ENCODE measurements at regions of chr17 and their contacts with region 1.

Region 1: DNA sequence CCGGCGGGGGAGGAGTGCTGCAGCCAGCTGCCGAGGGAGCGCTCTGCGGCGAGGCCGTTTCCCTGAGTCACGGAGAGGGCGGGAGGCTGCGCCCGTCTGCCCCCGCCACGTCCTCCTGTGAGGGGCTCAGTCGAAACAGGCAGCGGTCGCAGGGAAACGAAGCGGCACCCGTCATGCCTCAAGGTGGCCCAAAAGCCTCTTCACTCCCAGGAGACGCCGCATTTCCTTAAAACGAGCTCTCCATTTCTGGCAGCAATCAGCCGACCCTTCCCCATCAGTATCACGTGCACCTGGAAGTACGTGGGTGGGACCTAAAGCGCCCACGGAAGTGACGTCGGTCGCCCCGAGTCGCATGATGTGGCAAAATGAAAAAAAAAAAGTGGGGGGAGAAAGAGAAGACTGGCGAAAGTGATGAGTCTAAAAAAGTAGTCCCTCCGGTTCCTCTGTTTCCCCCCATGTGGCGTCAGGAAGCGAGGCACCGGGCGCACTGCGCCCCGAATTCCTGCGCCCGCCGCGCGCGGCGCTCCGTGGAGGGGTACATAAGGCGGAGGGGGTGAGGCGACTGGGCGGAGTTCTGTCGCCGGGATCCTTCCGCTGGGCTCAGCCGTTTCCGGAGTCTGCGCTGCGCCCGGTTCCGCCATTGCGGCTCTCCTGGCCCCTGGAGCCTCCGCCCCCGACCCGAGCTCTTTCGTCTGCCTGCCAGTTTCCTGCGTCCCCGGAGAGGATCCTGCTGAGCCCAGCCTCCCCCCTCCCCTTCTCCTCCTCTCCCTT is at the start of gene CLTC:
- DNase-seq: peak; percentile 86 to 93
- H3K4me3 ChIP-seq: peak within 1 kb of the TSS; percentile 99
- H3K4me1 ChIP-seq: peaks cover 37% of the 10 kb centered on the region
- H3K27me3 ChIP-seq: no peaks in the 10 kb centered on the region

Region 2: GRCh38 chr17:59521204-59522126 is 98.0 kb before region 1 on chr17:
- in situ Hi-C with region 1: loop called (anchors 10 kb)
- DNase-seq: peak; percentile 56 to 84
- H3K4me3 ChIP-seq: no peak overlapping the region
- H3K4me1 ChIP-seq: peaks cover 4% of the 10 kb centered on the region; the same call in 1 of the 2 replicates
- H3K27me3 ChIP-seq: no peaks in the 10 kb centered on the region

Region 3: DNA sequence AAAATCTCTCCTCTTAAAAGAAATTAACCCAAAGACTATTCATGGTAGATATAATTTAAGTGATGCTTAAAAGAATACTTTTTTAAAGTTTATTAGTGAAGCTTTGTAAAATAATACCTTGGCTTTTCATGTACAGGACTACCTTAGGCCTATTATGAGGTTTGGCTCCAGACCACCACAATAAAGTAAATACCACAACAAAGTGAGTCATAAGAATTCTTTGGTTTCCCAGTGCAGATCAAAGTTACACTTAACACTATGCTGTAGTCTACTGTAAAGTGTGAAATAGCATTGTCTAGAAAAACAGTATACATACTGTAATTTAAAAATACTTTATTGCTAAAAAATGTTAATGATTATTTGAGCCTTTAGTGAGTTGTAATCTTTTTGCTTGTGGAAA is 31.9 kb after region 1 on chr17:
- in situ Hi-C with region 1: no loop called
- DNase-seq: no peak
- H3K4me3 ChIP-seq: no peak overlapping the region
- H3K4me1 ChIP-seq: no peaks in the 10 kb centered on the region
- H3K27me3 ChIP-seq: no peaks in the 10 kb centered on the region